Caco-2 (cell line): ENCODE measurements at regions of chr4 and their contacts with region 1.

Region 1: DNA sequence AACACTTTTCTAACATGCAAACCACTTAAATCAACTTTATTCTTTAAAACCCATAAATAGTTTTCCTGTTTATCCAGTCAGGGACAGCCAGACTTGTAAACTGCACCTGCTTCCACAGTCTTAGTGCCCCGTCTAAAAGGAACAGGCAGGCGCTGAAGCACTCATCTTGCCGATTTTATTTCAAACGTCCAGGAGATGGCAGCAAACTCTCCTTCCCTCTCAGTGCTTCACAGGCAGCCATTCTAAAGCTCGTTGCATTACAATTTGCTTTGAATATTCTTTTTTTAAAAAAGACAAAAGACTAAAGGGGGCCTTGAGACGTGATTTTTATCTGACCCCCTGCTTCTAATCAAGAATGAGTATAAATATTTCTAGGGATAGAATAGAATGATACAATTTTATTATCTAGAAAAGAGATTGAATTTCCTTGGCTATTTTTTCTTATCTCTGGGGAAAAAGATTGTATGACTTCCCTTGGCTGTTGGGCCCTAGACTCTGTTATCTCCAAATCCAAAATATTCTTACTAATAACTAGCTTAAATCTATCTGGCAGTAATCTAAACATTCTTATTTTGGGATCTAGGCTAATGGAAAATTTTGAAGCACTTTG is 93.6 kb upstream of the MYOZ2 start:
- DNase-seq: peak; percentile 72 to 78
- H3K4me3 ChIP-seq: no peak overlapping the region
- H3K4me3 Mint-ChIP-seq: no peak overlapping the region
- H3K27ac Mint-ChIP-seq: no peak overlapping the region
- H3K4me1 ChIP-seq: peaks cover 10% of the 10 kb centered on the region
- H3K4me1 Mint-ChIP-seq: peaks cover 20% of the 10 kb centered on the region
- H3K27me3 ChIP-seq: no peaks in the 10 kb centered on the region
- H3K27me3 Mint-ChIP-seq: no peaks in the 10 kb centered on the region
- CTCF ChIP-seq: peak; percentile 62 to 77

Region 2: DNA sequence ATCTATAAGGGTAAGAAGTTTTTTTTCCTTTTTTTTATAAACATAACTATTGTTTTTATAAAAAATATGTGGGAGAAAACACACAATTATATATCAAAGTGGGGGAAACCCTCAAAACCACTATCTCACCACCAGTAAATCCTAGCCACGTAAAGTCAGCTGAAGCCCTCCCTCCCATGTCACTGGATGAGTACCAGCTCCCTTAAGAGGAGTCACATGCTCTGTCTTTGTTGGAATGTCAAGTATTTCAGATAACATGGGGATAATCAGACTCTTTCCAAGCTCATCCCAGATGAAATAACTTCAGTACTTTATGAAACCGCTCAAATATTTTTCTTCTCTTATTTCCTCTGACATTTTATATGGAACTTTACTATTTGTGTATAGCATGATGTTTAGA is 96.0 kb after region 1 on chr4:
- CTCF ChIA-PET with region 1: interaction called, 6 read pairs
- POLR2A ChIA-PET with region 1: interaction called, 3 read pairs
- intact Hi-C with region 1: loop called (anchors 1 kb)
- DNase-seq: peak in 1 of 2 experiments; percentile 33
- H3K4me3 ChIP-seq: no peak overlapping the region
- H3K4me3 Mint-ChIP-seq: no peak overlapping the region
- H3K27ac Mint-ChIP-seq: peak overlapping the region; percentile 70
- H3K4me1 ChIP-seq: peaks cover 60% of the 10 kb centered on the region
- H3K4me1 Mint-ChIP-seq: peaks cover 50% of the 10 kb centered on the region
- H3K27me3 ChIP-seq: no peaks in the 10 kb centered on the region
- H3K27me3 Mint-ChIP-seq: no peaks in the 10 kb centered on the region
- CTCF ChIP-seq: no peak

Region 3: DNA sequence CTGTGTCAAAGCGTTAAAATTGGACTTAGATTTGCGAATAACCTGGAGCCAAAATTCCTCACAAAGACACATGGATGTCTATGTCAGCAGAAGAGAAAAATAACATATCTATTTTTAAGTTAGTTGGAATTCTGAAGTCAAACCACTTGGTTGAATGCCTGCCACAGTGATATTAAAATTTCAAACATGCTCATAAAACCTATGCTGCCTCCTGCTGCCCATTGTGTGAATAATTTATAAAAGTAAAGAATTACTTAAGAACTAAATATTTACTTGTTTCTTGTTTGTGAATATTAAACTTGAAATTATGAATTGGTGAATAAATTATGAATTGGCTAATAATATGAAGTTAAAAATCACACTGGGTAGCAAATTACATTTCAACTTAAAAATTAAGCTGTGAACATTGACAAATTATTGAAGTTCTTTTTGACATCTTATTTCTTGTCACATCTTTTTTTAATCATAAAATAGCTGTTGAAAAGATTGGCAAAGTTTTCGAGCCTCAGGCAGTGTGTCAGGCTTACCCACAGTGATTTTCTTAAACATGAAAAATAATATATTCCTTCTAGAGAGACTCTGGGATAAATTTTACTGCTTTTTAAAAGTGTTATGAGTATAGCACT is 244.4 kb after region 1 on chr4:
- CTCF ChIA-PET with region 1: interaction called, 3 read pairs
- POLR2A ChIA-PET with region 1: no interaction called
- intact Hi-C with region 1: loop called (anchors 1 kb)
- DNase-seq: no peak
- H3K4me3 ChIP-seq: no peak overlapping the region
- H3K4me3 Mint-ChIP-seq: no peak overlapping the region
- H3K27ac Mint-ChIP-seq: no peak overlapping the region
- H3K4me1 ChIP-seq: peaks cover 10% of the 10 kb centered on the region
- H3K4me1 Mint-ChIP-seq: peaks cover 19% of the 10 kb centered on the region
- H3K27me3 ChIP-seq: no peaks in the 10 kb centered on the region
- H3K27me3 Mint-ChIP-seq: no peaks in the 10 kb centered on the region
- CTCF ChIP-seq: peak; percentile 34 to 52